Colonic mucosa (tissue), 4 donors: ENCODE measurements at regions of chr17 and their contacts with region 1.

Region 1: DNA sequence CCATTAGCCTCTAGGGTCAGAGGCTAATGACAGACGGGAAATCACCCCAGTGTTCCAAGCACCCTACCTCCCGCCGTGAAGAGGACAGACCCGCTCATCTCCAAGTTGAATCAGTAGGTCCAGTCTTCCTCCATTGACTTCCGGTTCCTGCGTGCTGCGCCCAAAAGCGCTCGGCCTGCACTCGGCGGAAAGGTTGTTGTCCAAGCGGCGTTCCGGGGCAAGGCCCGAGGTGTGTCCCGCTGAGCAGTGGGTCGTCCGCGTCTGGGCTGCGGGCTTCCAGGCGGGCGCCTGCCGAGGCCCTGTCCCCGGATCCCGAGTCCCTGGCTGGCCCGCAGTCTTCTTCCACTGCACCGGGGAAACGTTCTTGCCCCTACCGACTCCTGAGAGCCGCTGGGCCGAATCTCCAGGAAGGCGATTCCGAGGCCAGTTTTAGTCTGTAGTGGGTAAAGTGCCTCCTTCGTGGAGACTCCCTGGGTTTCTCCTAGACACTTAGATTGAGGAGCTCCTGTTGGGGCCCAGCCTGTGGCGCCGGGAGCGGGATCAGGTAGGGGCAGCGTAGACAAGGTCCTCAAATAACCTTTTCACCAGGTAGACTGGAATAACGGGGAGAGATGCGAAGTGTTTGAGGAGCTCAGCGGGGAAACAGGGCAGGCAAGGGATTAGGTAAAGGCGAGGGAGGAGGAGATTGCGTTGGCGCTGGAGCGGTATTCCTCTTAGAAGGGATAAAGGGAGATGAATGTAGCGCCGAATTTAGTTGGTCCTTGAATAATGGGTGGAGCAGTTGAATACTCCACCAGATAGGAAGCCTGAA is at the start of gene TEFM:
- DNase-seq: peak; percentile 92
- H3K4me3 ChIP-seq: peak within 1 kb of the TSS; percentile 82
- H3K27ac ChIP-seq: peak within 1 kb of the TSS; percentile 94
- H3K4me1 ChIP-seq: no peaks in the 10 kb centered on the region
- H3K27me3 ChIP-seq: no peaks in the 10 kb centered on the region
- CTCF ChIP-seq: no peak
- total RNA-seq, gene TEFM: 12.4 to 15.4 TPM

Region 2: GRCh38 chr17:30808785-30809286 is 97.5 kb before region 1 on chr17:
- intact Hi-C with region 1: no loop called
- DNase-seq: no peak
- H3K4me3 ChIP-seq: no peak overlapping the region
- H3K27ac ChIP-seq: peak overlapping the region; percentile 28
- H3K4me1 ChIP-seq: no peaks in the 10 kb centered on the region
- H3K27me3 ChIP-seq: no peaks in the 10 kb centered on the region
- CTCF ChIP-seq: no peak

Region 3: GRCh38 chr17:30848021-30848420 is 58.3 kb before region 1 on chr17:
- intact Hi-C with region 1: no loop called
- DNase-seq: no peak
- H3K4me3 ChIP-seq: no peak overlapping the region
- H3K27ac ChIP-seq: no peak overlapping the region
- H3K4me1 ChIP-seq: no peaks in the 10 kb centered on the region
- H3K27me3 ChIP-seq: no peaks in the 10 kb centered on the region
- CTCF ChIP-seq: no peak

Region 4: GRCh38 chr17:30970831-30971567 is 64.7 kb after region 1 on chr17 and contains the start of gene RNF135:
- intact Hi-C with region 1: loop called (anchors 5 kb)
- DNase-seq: peak; percentile 90
- H3K4me3 ChIP-seq: peak within 1 kb of the TSS; percentile 64
- H3K27ac ChIP-seq: peak within 1 kb of the TSS; percentile 99
- H3K4me1 ChIP-seq: no peaks in the 10 kb centered on the region
- H3K27me3 ChIP-seq: no peaks in the 10 kb centered on the region
- CTCF ChIP-seq: no peak
- total RNA-seq, gene RNF135: 18.6 to 18.9 TPM